ENCODE measurements at regions of chr7 and their contacts with region 1.

Region 1: DNA sequence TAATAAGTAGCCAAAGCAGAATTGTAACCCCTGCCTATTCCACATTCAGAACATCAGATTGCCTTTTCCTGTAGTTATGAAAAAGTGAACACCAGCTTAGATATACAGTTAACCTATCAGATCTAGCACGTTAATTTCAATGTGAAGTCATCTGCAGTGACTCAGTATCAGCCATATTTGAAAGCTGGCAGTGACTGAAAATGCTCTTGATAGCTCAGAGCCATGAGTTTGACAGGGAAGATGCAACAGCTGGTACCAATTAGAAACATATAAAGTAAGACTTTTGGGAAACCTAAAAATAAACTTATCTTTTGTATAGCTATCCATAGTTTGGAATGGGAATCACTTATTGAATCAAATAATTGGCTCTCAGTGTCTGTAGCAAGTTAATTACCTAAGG is 284.1 kb upstream of the NPSR1 start:
- DNase-seq: no peak
- H3K4me3 ChIP-seq: no peak overlapping the region
- CTCF ChIP-seq: no peak
- POLR2A ChIP-seq: no peak

Region 2: GRCh38 chr7:34338961-34339526 is 34.9 kb before region 1 on chr7:
- intact Hi-C with region 1: loop called (anchors 2 kb)
- DNase-seq: no peak
- H3K4me3 ChIP-seq: no peak overlapping the region
- CTCF ChIP-seq: no peak
- POLR2A ChIP-seq: no peak

Measured in lower leg skin (tissue), 4 donors.